Breast epithelium (tissue), 4 donors: ENCODE measurements at regions of chr10 and their contacts with region 1.

Region 1: DNA sequence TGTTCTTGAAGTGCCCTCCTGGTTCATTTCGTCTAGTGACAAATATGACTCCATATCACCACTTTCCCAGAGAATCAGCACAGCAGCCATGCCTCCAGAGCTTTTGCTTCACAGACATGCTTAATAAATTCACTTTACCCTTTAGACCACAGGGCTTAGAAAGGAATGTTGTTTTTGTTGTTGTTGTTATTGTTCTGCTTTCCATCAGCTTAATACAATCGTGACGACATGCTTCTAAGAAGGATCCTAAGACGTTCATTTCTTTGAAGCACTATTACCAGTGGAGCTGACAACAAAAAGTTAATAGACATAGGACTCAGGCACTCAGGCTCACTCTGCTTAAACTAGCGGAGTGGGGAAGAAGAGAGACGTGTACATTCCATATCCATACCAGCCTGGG is 418.6 kb downstream of the KCNMA1 start:
- DNase-seq: no peak
- H3K4me3 ChIP-seq: no peak overlapping the region
- H3K27ac ChIP-seq: no peak overlapping the region
- H3K4me1 ChIP-seq: no peaks in the 10 kb centered on the region
- H3K27me3 ChIP-seq: no peaks in the 10 kb centered on the region
- CTCF ChIP-seq: no peak
- POLR2A ChIP-seq: no peak

Region 2: DNA sequence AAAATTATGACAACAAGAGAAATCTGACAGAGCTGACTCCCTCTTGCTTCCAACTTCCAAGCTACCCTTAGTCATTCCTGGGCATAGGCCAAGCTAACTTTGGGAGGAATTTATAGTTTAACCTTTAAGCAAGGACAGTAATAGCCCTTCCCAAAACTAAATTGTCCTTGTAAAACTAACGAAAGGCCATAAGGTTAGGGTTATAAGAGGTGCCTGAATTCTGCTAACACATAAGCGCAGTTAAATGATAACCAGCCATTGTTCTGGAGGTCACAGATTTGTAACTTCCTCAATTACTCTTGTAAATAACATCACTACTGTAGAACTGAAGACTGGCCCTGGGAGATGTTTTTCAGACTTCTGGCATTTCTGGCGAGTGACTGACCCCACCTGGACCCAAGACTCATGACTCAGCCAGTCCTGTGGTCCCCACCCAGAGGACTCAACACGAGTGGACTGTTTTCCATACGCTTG is 62.6 kb before region 1 on chr10:
- intact Hi-C with region 1: no loop called
- DNase-seq: no peak
- H3K4me3 ChIP-seq: no peak overlapping the region
- H3K27ac ChIP-seq: no peak overlapping the region
- H3K4me1 ChIP-seq: no peaks in the 10 kb centered on the region
- H3K27me3 ChIP-seq: no peaks in the 10 kb centered on the region
- CTCF ChIP-seq: no peak
- POLR2A ChIP-seq: no peak

Region 3: DNA sequence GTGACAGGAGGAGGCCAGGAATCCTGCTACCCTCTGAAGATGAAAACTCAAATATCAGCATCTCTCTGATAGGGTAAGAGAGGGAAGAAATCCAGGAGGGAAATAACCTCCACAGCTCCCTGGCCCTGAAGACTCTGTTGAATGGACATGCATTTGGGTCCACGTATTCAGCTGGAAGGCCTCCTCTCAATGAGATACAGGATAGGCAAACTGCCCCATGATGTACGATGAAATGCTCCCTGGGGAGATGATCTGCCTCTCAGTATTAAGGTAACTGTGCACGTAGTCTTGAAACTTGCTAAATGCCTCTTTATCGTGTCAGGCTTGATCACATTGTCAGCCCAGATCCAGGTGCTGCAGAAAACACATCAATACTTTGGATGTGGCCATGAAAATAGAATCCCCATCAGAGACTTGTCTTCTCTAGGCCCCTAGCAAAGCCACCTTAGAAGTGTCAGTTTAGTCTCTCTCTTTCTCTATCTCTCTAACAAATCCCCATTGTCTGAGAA is 34.6 kb after region 1 on chr10:
- intact Hi-C with region 1: loop called (anchors 2 kb)
- DNase-seq: no peak
- H3K4me3 ChIP-seq: no peak overlapping the region
- H3K27ac ChIP-seq: no peak overlapping the region
- H3K4me1 ChIP-seq: no peaks in the 10 kb centered on the region
- H3K27me3 ChIP-seq: no peaks in the 10 kb centered on the region
- CTCF ChIP-seq: no peak
- POLR2A ChIP-seq: no peak

Region 4: GRCh38 chr10:77441353-77442166 is 222.5 kb after region 1 on chr10:
- intact Hi-C with region 1: no loop called
- DNase-seq: no peak
- H3K4me3 ChIP-seq: no peak overlapping the region
- H3K27ac ChIP-seq: no peak overlapping the region
- H3K4me1 ChIP-seq: no peaks in the 10 kb centered on the region
- H3K27me3 ChIP-seq: no peaks in the 10 kb centered on the region
- CTCF ChIP-seq: no peak
- POLR2A ChIP-seq: no peak